Natural killer cell (primary cell): ENCODE measurements at regions of chr1 and their contacts with region 1.

Region 1: DNA sequence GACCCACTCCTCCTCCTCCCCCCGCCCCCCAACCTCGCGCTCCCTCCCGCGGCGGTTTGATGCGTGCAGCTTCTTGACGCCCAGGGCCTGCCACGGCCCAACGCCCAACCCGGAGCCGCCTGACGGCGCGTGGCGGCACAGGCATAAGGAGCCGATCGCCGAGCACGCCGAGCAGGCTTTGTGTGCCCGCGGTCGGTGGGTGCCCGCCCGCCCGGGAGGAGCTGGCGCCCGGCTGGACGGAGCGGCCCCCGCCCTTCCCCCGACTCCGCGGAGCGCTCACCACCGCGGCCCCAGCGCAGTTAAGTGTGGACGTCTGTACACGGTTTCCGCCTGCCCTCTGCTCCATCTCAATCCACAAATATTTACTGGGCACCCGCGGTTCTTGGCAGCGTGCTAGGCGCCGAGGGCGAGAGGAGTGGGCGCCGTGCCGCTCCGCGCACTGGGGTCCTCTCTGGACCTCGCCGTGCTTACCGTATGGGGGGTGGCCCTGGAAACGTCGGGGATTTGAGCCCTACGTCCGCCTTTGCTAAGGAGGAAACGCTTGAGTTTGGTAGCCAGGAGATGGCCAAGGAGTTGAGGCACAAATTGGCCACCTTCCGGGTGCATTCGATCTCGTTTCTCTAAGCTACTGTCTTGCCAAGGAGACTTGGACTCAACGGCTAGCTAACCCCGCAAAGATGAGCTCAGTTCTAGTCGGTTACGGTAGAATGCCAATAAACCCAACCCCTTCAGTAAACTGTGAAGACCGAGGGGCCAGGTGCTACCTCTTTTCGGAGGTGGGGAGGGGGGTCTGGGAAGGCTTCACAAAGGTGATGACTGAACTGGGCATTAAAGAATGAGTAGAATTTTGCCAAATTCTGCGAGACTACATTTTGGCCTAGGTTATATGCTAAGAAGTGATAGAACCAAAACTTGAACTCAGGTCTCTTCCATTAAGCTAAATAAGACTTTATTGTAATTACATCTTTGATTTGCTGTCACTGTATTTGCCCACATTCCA is 583 bp upstream of the HDGF start:
- DNase-seq: peak; percentile 88 to 97
- ATAC-seq: peak; percentile 83 to 95 (median 88)
- H3K4me3 ChIP-seq: peak overlapping the region; percentile 98
- H3K4me3 Mint-ChIP-seq: peak overlapping the region; percentile 91
- H3K27ac ChIP-seq: peak overlapping the region; percentile 92
- H3K27ac Mint-ChIP-seq: peak overlapping the region; percentile 90 to 94
- H3K4me1 ChIP-seq: peaks cover 52% of the 10 kb centered on the region
- H3K4me1 Mint-ChIP-seq: peaks cover 47 to 50% of the 10 kb centered on the region in 2 donors
- H3K27me3 ChIP-seq: no peaks in the 10 kb centered on the region
- H3K27me3 Mint-ChIP-seq: no peaks in the 10 kb centered on the region
- CTCF ChIP-seq: no peak

Region 2: GRCh38 chr1:156740679-156741612 is 11.1 kb before region 1 on chr1 and contains the start of gene MRPL24:
- intact Hi-C with region 1: loop called (anchors 1 kb)
- DNase-seq: peak; percentile 91 to 99
- ATAC-seq: peak; percentile 91 to 97 (median 93)
- H3K4me3 ChIP-seq: peak within 1 kb of the TSS; percentile 52
- H3K4me3 Mint-ChIP-seq: peak within 1 kb of the TSS; percentile 92
- H3K27ac ChIP-seq: peak within 1 kb of the TSS; percentile 84
- H3K27ac Mint-ChIP-seq: peak within 1 kb of the TSS; percentile 95 to 96
- H3K4me1 ChIP-seq: peaks cover 15% of the 10 kb centered on the region
- H3K4me1 Mint-ChIP-seq: peaks cover 30% of the 10 kb centered on the region in 2 donors
- H3K27me3 ChIP-seq: no peaks in the 10 kb centered on the region
- H3K27me3 Mint-ChIP-seq: no peaks in the 10 kb centered on the region
- CTCF ChIP-seq: no peak
- total RNA-seq, gene MRPL24: 15.9 to 19.7 (median 18.7) TPM

Region 3: GRCh38 chr1:156797212-156797871 is 45.3 kb after region 1 on chr1:
- intact Hi-C with region 1: no loop called
- DNase-seq: peak; percentile 39 to 86
- ATAC-seq: peak; percentile 73 to 89 (median 75)
- H3K4me3 ChIP-seq: no peak overlapping the region
- H3K4me3 Mint-ChIP-seq: no peak overlapping the region
- H3K27ac ChIP-seq: no peak overlapping the region
- H3K27ac Mint-ChIP-seq: no peak overlapping the region
- H3K4me1 ChIP-seq: peaks cover 11% of the 10 kb centered on the region
- H3K4me1 Mint-ChIP-seq: peaks cover 14 to 16% of the 10 kb centered on the region in 2 donors
- H3K27me3 ChIP-seq: no peaks in the 10 kb centered on the region
- H3K27me3 Mint-ChIP-seq: no peaks in the 10 kb centered on the region
- CTCF ChIP-seq: peak; percentile 85